Esophagus squamous epithelium (tissue), 5 donors: ENCODE measurements at regions of chr4 and their contacts with region 1.

Region 1: GRCh38 chr4:85318415-85318814 is 156.5 kb upstream of the ARHGAP24 start:
- DNase-seq: no peak
- H3K4me3 ChIP-seq: no peak overlapping the region
- H3K27ac ChIP-seq: no peak overlapping the region
- H3K4me1 ChIP-seq: no peaks in the 10 kb centered on the region
- H3K27me3 ChIP-seq: no peaks in the 10 kb centered on the region
- CTCF ChIP-seq: no peak
- POLR2A ChIP-seq: no peak

Region 2: DNA sequence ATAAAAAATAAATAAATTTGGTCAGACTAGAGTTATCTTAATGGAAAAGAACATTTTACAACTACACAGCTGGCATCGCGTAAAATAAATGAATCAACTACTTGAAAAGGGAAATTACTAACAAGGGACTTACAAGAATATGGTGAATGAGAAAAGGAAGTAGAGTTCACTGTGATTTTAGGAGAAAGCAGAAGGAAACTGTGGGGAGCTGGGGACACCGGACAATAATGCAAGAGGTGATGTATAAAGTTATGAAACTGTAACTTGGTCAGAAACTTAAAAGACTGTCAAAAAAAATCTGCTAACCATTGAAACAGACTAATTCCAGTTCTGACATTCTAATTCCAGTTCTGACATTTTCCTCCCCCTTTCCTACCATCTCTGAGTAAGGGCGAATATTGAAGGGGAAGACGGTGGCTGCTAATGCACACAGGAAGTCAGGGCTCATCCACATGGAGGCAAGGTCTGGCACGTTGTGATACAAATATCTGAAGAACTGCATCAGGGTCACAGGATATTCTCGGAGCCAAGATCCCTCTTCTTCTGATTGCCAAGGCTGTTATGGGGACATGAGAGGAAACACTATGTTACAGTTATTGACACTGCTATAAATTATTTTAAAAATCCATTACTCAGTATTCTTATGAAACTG is 565.0 kb before region 1 on chr4:
- intact Hi-C with region 1: no loop called
- DNase-seq: no peak
- H3K4me3 ChIP-seq: no peak overlapping the region
- H3K27ac ChIP-seq: no peak overlapping the region
- H3K4me1 ChIP-seq: peaks cover 0 to 4% (median 0%) of the 10 kb centered on the region in 3 donors
- H3K27me3 ChIP-seq: no peaks in the 10 kb centered on the region
- CTCF ChIP-seq: no peak
- POLR2A ChIP-seq: no peak

Region 3: DNA sequence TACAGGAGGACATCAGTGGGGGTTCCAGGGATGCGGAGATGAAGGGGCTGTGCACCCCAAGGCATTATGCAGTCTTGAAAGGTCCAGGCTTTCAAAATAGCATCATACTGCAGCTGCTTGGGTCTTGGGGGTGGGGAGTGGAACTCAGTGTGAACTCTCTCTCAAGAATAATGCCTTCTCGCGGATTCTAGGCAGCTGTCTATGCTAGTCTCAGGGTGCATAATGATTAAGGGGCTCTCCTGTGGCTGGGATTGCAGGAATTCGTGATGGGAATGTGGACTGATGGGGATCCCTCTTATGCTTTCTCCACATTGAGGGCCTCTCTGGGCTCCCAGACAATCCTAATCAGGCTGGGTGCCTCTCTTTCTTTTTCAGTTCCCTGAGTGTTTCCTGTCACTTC is 15.7 kb before region 1 on chr4:
- intact Hi-C with region 1: loop called (anchors 2 kb)
- DNase-seq: no peak
- H3K4me3 ChIP-seq: no peak overlapping the region
- H3K27ac ChIP-seq: no peak overlapping the region
- H3K4me1 ChIP-seq: no peaks in the 10 kb centered on the region
- H3K27me3 ChIP-seq: no peaks in the 10 kb centered on the region
- CTCF ChIP-seq: no peak
- POLR2A ChIP-seq: no peak

Region 4: GRCh38 chr4:85512446-85513205 is 194.2 kb after region 1 on chr4:
- intact Hi-C with region 1: no loop called
- DNase-seq: no peak
- H3K4me3 ChIP-seq: no peak overlapping the region
- H3K27ac ChIP-seq: no peak overlapping the region
- H3K4me1 ChIP-seq: peaks cover 0 to 27% (median 11%) of the 10 kb centered on the region in 3 donors
- H3K27me3 ChIP-seq: no peaks in the 10 kb centered on the region
- CTCF ChIP-seq: no peak
- POLR2A ChIP-seq: no peak